ENCODE measurements at regions of chr3 and their contacts with region 1.

Region 1: GRCh38 chr3:65485826-65486469 is 552.8 kb downstream of the MAGI1 start:
- DNase-seq: peak; percentile 5
- ATAC-seq: no peak
- H3K4me3 ChIP-seq: no peak overlapping the region
- H3K27ac ChIP-seq: no peak overlapping the region
- H3K4me1 ChIP-seq: peaks cover 2% of the 10 kb centered on the region; the same call in 1 of the 2 replicates
- H3K27me3 ChIP-seq: no peaks in the 10 kb centered on the region
- CTCF ChIP-seq: no peak
- POLR2A ChIP-seq: no peak
- RAD21 ChIP-seq: no peak

Region 2: DNA sequence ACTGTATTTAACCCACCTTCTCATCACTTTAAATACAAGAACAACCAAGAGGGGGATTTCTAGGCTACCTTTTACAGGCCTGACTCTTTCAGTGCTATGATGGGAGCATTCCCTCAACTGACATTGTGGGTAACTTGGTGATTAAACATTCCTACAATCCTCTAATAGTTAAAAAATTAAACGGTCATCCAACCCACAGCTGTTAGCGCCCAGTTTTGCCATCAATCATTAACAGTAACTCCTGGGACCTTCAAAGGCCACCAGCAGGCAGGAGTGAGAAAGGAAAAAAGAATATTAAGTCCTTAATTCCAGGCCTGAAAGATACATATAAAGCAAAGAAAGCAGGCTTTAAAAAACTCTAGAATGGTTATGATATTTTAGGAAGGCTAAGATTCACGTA is 40.7 kb after region 1 on chr3:
- CTCF ChIA-PET with region 1: no interaction called
- POLR2A ChIA-PET with region 1: no interaction called
- dilution Hi-C with region 1: no loop called
- in situ Hi-C with region 1: no loop called
- intact Hi-C with region 1: loop called (anchors 5 kb)
- DNase-seq: no peak
- ATAC-seq: no peak
- H3K4me3 ChIP-seq: no peak overlapping the region
- H3K27ac ChIP-seq: no peak overlapping the region
- H3K4me1 ChIP-seq: peaks cover 3% of the 10 kb centered on the region
- H3K27me3 ChIP-seq: no peaks in the 10 kb centered on the region
- CTCF ChIP-seq: no peak
- POLR2A ChIP-seq: no peak
- RAD21 ChIP-seq: no peak

Region 3: GRCh38 chr3:66773257-66773656 is 1287.3 kb after region 1 on chr3:
- CTCF ChIA-PET with region 1: no interaction called
- POLR2A ChIA-PET with region 1: no interaction called
- dilution Hi-C with region 1: no loop called
- in situ Hi-C with region 1: no loop called
- intact Hi-C with region 1: no loop called
- DNase-seq: no peak
- ATAC-seq: no peak
- H3K4me3 ChIP-seq: no peak overlapping the region
- H3K27ac ChIP-seq: no peak overlapping the region
- H3K4me1 ChIP-seq: no peaks in the 10 kb centered on the region
- H3K27me3 ChIP-seq: no peaks in the 10 kb centered on the region
- CTCF ChIP-seq: no peak
- POLR2A ChIP-seq: no peak
- RAD21 ChIP-seq: no peak